Endothelial cell of umbilical vein (primary cell): ENCODE measurements at regions of chr6 and their contacts with region 1.

Region 1: DNA sequence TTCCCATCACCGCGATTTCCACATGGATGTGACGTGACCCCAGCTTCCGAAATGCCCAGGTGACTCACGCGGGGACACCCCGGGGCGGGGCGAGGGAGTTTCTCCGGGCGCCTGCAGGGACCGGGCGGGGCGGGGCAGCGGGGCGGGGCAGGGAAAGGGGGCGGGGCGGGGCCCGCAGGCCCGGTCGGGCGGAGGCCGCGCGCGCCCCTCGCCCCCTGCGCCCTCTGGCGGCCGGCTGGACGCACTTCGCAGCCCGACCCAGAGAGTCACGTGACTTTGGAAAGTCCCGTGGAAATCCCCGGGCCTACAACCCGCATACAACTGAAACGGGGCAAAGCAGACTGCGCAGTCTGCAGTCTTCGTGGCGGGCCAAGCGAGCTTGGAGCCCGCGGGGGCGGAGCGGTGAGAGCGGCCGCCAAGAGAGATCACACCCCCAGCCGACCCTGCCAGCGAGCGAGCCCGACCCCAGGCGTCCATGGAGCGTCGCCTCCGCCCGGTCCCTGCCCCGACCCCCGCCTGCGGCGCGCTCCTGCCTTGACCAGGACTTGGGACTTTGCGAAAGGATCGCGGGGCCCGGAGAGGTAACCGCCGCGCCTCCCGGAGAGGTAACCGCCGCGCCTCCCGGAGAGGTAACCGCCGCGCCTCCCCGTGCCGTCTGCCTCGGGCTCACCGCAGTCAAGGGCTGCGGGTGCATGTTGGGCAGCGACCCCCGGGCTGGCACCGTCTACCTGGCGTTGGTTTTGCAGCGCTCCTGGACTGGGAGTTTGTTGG is at the start of gene TNFAIP3:
- DNase-seq: peak; percentile 96
- H3K4me3 ChIP-seq: peak within 1 kb of the TSS; percentile 54 to 88 (median 63)
- H3K27ac ChIP-seq: peak within 1 kb of the TSS; percentile 65
- H3K4me1 ChIP-seq: peaks cover 24% of the 10 kb centered on the region
- H3K27me3 ChIP-seq: no peaks in the 10 kb centered on the region
- CTCF ChIP-seq: peak; percentile 70 to 81
- POLR2A ChIP-seq: peak; percentile 45
- total RNA-seq, gene TNFAIP3: 4.2 and 8.6 TPM in 2 replicates

Region 2: DNA sequence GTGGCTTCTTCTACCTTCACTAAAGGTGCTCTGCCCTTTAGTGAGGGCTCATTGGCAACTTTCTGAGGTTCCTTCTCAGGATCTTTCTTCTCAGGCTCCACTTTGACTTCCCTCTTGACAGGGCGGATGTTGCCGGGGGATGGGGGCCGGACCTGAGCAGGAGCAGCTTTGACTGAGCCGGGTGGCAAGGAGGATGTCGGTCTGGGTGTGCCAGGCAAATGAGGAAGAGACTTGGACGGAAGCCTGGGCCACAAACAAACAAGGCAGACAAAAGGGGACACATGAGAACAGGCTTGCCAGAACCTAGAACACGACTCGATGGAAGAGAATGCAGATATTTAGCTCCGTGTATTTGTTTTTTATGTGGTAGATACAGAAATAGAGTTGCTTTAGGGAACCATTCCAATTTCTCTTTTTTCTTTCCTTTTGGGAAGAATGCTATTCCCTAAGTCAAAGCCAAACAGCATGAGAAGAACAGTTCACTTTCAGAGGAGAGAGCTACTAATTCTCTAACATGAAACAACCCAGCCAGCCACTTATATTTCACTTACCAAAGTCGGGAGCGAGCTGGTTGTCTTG is 1501.2 kb before region 1 on chr6:
- CTCF ChIA-PET with region 1: no interaction called
- POLR2A ChIA-PET with region 1: no interaction called
- dilution Hi-C with region 1: no loop called
- intact Hi-C with region 1: no loop called
- DNase-seq: no peak
- H3K4me3 ChIP-seq: no peak overlapping the region
- H3K27ac ChIP-seq: no peak overlapping the region
- H3K4me1 ChIP-seq: no peaks in the 10 kb centered on the region
- H3K27me3 ChIP-seq: peaks cover 0 to 7% of the 10 kb centered on the region in 2 experiments
- CTCF ChIP-seq: no peak
- POLR2A ChIP-seq: no peak

Region 3: GRCh38 chr6:137443901-137444300 is 423.2 kb before region 1 on chr6:
- CTCF ChIA-PET with region 1: no interaction called
- POLR2A ChIA-PET with region 1: no interaction called
- dilution Hi-C with region 1: no loop called
- intact Hi-C with region 1: no loop called
- DNase-seq: no peak
- H3K4me3 ChIP-seq: no peak overlapping the region
- H3K27ac ChIP-seq: no peak overlapping the region
- H3K4me1 ChIP-seq: no peaks in the 10 kb centered on the region
- H3K27me3 ChIP-seq: no peaks in the 10 kb centered on the region
- CTCF ChIP-seq: no peak
- POLR2A ChIP-seq: no peak

Region 4: DNA sequence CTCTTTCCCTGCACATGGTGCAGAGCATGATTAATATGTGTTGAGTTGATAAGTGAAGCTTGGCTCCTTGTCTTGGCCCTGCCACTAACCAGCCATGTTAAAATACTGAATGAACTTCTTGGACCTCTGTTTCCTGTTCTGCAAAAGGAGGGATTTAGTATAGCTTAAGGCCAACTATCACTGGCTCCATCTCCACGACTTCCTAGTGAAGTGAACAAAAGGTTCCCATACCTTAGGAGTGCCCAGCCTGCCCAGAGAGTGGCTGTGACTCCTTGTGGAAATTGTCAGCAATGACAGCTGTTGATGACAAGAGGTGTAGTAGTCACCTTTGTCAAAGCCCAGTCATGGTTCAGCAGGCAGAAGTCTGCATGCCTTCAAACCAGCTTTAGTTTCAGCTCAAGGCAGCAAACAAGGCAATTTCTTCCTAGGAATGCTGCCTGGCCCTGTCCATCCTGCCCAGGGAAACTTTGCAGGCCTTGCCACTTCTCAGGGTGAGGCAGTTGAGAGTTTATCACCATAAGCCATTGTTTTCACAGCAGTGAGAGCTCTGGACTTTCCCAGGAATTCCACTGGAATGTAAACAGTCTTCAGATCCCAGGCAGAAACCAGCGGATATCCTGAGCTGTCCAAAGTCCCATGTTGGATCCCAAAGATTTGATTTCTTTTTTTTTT is 169.7 kb before region 1 on chr6:
- CTCF ChIA-PET with region 1: interaction called, 12 read pairs
- POLR2A ChIA-PET with region 1: no interaction called
- dilution Hi-C with region 1: no loop called
- intact Hi-C with region 1: no loop called
- DNase-seq: peak; percentile 97
- H3K4me3 ChIP-seq: no peak overlapping the region
- H3K27ac ChIP-seq: peak overlapping the region; percentile 71
- H3K4me1 ChIP-seq: peaks cover 31% of the 10 kb centered on the region
- H3K27me3 ChIP-seq: no peaks in the 10 kb centered on the region
- CTCF ChIP-seq: peak in 1 of 2 donors; percentile 17
- POLR2A ChIP-seq: peak; percentile 24

Region 5: DNA sequence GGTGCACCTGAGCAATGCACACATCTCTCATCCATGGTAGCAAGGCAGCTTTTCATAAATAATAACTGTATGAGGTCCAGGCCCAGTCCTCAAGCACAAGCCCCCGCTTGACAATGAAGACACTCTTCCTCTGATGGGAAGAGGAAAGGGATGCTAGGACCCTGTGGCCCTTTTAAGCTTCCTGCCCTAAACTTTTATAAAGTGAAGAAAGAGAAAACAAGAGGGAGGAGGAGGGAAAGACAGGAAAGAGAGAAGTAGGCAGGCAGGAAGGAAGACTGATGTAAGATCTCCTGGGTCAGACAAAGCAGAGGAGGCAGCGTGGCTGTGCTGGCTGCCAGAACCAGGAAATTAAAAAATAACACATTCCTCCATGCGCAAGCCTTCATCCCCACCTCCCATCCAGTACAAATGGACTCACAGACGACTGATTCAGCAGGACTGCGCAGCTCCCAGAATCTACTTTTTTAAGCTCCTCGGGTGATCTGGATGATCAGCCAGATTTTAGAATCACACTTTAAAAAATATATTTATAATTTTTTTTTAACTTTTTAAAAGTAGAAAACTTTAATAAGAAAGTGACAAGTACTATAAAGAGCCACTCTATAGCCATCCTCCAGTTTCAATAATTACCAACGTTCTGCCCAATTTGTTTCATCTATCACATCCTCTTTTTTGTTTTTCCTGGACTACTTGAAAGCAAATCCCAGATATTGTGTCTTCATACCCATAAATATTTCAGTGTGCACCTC is 16.5 kb after region 1 on chr6:
- CTCF ChIA-PET with region 1: interaction called, 12 read pairs
- POLR2A ChIA-PET with region 1: no interaction called
- dilution Hi-C with region 1: no loop called
- intact Hi-C with region 1: loop called (anchors 1 kb)
- DNase-seq: peak; percentile 79
- H3K4me3 ChIP-seq: no peak overlapping the region
- H3K27ac ChIP-seq: peak overlapping the region; percentile 72
- H3K4me1 ChIP-seq: peaks cover 16% of the 10 kb centered on the region
- H3K27me3 ChIP-seq: no peaks in the 10 kb centered on the region
- CTCF ChIP-seq: no peak
- POLR2A ChIP-seq: peak; percentile 54

Region 6: GRCh38 chr6:137944793-137945498 is 77.8 kb after region 1 on chr6:
- CTCF ChIA-PET with region 1: interaction called, 111 read pairs
- POLR2A ChIA-PET with region 1: no interaction called
- dilution Hi-C with region 1: no loop called
- intact Hi-C with region 1: loop called (anchors 1 kb)
- DNase-seq: peak; percentile 56
- H3K4me3 ChIP-seq: no peak overlapping the region
- H3K27ac ChIP-seq: no peak overlapping the region
- H3K4me1 ChIP-seq: no peaks in the 10 kb centered on the region
- H3K27me3 ChIP-seq: no peaks in the 10 kb centered on the region
- CTCF ChIP-seq: peak; percentile 58 to 59
- POLR2A ChIP-seq: no peak

Region 7: DNA sequence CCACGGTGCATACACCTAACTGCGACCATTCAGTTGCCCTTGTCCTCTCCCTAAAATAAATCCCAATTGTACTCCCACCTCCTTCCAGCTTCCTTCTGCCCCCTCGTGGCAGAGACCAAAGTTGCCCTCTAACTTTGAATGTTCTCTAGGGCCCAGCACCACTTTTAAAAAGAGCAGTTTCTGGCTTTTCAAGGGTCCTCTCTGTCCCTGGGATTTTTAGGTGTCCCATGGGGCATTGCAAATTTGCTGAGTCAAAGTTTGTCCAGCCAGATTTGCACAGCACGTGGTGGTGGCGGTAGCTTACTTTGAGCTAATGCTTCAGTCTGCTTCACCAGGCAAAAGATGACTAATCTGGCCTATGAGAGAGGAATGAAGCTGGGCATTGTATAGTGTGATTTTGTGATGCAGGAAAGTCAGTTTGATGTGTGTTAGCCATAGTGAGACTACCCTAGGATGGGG is 139.9 kb after region 1 on chr6:
- CTCF ChIA-PET with region 1: interaction called, 10 read pairs
- POLR2A ChIA-PET with region 1: no interaction called
- dilution Hi-C with region 1: no loop called
- intact Hi-C with region 1: loop called (anchors 2 kb)
- DNase-seq: peak; percentile 27
- H3K4me3 ChIP-seq: no peak overlapping the region
- H3K27ac ChIP-seq: no peak overlapping the region
- H3K4me1 ChIP-seq: no peaks in the 10 kb centered on the region
- H3K27me3 ChIP-seq: no peaks in the 10 kb centered on the region
- CTCF ChIP-seq: peak; percentile 50 to 63
- POLR2A ChIP-seq: no peak